Activated CD4-positive, alpha-beta T cell treated with anti-CD3 and anti-CD28 coated beads for 36 hours (primary cell): ENCODE measurements at regions of chr1 and their contacts with region 1.

Region 1: GRCh38 chr1:19430121-19431068 is 54.9 kb downstream of the CAPZB start:
- DNase-seq: peak; percentile 29
- ATAC-seq: no peak
- H3K4me3 Mint-ChIP-seq: peak overlapping the region; percentile 7
- H3K27ac Mint-ChIP-seq: peak overlapping the region; percentile 83
- H3K4me1 Mint-ChIP-seq: peaks cover 84% of the 10 kb centered on the region
- H3K27me3 Mint-ChIP-seq: no peaks in the 10 kb centered on the region

Region 2: GRCh38 chr1:19477284-19478249 is 47.2 kb after region 1 on chr1:
- CTCF ChIA-PET with region 1: interaction called, 5 read pairs
- POLR2A ChIA-PET with region 1: interaction called, 3 read pairs
- intact Hi-C with region 1: loop called in 1 of 2 experiments (anchors 5 kb)
- DNase-seq: peak; percentile 60
- ATAC-seq: peak; percentile 62
- H3K4me3 Mint-ChIP-seq: peak overlapping the region; percentile 64
- H3K27ac Mint-ChIP-seq: peak overlapping the region; percentile 87
- H3K4me1 Mint-ChIP-seq: peaks cover 93% of the 10 kb centered on the region
- H3K27me3 Mint-ChIP-seq: no peaks in the 10 kb centered on the region